ENCODE measurements at regions of chr1 and their contacts with region 1.

Region 1: DNA sequence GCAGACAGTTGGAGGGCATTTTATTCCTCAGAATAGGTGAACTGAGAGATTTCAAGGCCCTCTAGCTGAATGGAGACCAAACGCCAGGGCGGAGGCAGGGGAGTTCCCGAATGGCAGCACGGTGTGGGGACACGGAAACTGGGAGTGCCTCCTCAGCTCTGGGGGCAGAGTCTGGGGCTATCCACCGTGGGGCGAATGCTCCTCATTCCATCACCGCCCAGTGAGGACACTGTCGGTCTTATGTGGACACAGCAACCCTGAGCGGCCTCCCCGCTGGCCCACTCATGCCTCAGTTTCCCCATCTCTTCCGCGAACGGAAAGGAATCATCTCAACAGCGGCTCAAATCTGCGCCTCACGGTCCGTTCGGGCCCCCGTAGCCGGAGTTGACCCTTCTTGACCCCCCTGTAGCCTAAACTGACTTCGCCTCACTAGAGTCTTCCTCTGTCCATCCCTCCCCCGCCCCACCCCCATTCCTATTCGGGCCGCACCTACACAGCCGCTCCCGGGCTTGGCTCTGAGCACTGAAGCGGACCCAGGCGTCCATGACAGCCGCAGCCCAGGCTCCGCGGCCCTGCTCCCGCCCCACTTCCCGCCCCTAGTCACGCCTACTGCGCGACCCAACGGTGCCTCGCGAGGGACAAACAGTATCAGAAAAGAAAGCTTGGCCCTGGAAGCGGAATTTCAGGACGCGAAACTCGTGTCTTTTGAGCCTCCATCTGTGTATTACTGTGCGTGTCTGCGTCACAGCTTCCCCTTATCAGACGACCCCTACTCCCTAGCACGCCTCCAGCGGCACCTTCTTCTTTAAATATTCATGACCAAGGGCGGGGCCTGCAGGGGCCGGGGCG is at the start of gene PEX11B:
- DNase-seq: peak; percentile 91 to 92
- H3K4me3 ChIP-seq: peak within 1 kb of the TSS; percentile 33 to 88 (median 80)
- H3K27ac ChIP-seq: peak within 1 kb of the TSS; percentile 48 to 96 (median 94)
- H3K4me1 ChIP-seq: peaks cover 17 to 19% of the 10 kb centered on the region in 2 donors
- H3K27me3 ChIP-seq: no peaks in the 10 kb centered on the region
- CTCF ChIP-seq: no peak
- POLR2A ChIP-seq: peak in 1 of 2 donors; percentile 66
- total RNA-seq, gene PEX11B: 30.6 to 42.1 (median 37.3) TPM

Region 2: GRCh38 chr1:145957443-145958319 is 39.3 kb after region 1 on chr1 and contains the start of gene LIX1L:
- intact Hi-C with region 1: loop called (anchors 5 kb)
- DNase-seq: peak; percentile 97 to 98
- H3K4me3 ChIP-seq: peak within 1 kb of the TSS; percentile 30 to 71 (median 56)
- H3K27ac ChIP-seq: peak within 1 kb of the TSS; percentile 81 to 96 (median 90)
- H3K4me1 ChIP-seq: peaks cover 27 to 29% of the 10 kb centered on the region in 2 donors
- H3K27me3 ChIP-seq: no peaks in the 10 kb centered on the region
- CTCF ChIP-seq: no peak
- POLR2A ChIP-seq: peak in 1 of 2 donors; percentile 77
- total RNA-seq, gene LIX1L: 18.7 to 26.9 (median 20.3) TPM